IMR-90 (cell line): ENCODE measurements at regions of chr2 and their contacts with region 1.

Region 1: DNA sequence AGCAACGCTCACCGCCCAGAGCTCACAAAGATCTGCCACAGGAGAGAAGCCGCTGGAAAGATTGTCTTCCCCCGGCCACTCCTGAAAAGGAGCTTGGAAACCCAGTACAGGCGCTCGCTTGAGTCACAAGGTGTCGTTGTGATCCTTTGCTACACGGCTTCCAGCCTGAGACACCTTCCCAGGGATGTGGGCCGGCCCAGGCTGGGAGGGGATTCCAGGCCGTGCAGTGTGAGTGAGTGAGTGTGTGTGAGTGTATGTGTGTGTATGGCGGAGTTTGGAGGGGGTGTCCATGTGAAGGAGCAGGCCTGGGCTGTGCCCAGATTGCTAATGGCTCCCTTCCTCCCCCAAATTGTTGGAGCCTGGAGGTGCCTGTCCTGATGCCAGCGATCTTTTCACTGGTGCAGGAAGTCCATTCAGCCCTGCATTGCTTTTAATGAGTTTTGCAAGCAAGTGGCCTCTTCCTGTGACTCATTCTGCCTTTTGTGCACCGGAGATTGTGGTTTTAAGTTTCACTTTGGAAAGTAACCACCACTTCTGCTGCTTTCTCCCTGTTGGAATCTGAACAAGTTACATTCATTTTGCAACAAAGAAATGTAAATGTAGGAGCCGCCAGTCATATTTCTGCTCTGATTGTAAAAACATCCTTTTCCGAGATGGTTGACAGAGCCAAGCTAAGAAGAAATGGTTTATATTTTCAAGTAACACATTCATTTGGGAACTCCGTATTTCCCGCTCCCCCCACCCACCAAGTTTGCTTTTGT is 83.7 kb downstream of the LPIN1 start:
- DNase-seq: peak; percentile 98
- ATAC-seq: peak; percentile 83
- H3K4me3 ChIP-seq: peak overlapping the region; percentile 25; the same call in 1 of the 2 replicates
- H3K27ac ChIP-seq: peak overlapping the region; percentile 96
- H3K4me1 ChIP-seq: peaks cover 19% of the 10 kb centered on the region
- H3K27me3 ChIP-seq: no peaks in the 10 kb centered on the region
- CTCF ChIP-seq: peak; percentile 55
- POLR2A ChIP-seq: no peak
- RAD21 ChIP-seq: peak; percentile 68

Region 2: DNA sequence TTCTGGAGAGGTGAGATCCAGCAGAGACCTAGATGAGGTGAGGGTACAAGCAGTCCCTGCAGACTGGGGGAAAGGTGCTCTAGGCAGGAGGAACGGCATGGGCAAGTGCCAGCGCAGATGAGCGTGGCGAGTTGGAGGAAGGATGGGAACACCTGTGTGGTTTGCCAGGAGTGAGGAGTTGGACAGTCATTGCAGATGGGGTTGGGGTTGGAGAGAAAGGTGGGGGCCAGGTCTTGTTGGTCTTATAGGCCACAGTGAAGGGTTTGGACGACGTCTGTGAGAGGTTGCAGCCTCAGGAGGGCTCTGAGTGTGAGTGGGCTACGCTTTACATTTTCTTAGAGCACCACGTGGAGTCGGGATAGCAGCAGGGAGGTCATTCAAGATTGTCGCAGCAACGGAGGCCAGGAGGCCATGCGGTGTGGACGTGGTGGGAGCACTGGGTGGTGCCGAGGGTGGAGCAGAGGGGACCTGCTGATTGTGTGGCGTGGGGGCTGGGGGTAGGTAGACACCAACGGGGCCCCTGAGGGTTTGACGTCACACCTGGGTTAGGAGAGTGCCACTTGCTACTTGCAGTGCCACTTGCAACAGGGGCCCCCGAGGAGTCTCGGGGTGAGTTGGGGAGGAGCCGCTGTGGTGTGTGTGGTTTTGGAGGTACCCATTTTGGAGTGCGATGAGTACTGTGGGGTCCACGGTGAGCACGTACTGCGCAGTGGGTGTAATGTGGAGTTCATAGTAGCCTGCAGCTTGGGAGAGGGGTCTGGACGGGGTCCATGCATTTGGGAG is 17.5 kb before region 1 on chr2:
- CTCF ChIA-PET with region 1: no interaction called
- POLR2A ChIA-PET with region 1: no interaction called
- dilution Hi-C with region 1: no loop called
- in situ Hi-C with region 1: no loop called
- intact Hi-C with region 1: no loop called
- DNase-seq: no peak
- ATAC-seq: no peak
- H3K4me3 ChIP-seq: no peak overlapping the region
- H3K27ac ChIP-seq: no peak overlapping the region
- H3K4me1 ChIP-seq: no peaks in the 10 kb centered on the region; the same call in 1 of the 2 replicates
- H3K27me3 ChIP-seq: no peaks in the 10 kb centered on the region
- CTCF ChIP-seq: no peak
- POLR2A ChIP-seq: no peak
- RAD21 ChIP-seq: no peak

Region 3: GRCh38 chr2:11873356-11874154 is 43.4 kb after region 1 on chr2:
- CTCF ChIA-PET with region 1: no interaction called
- POLR2A ChIA-PET with region 1: no interaction called
- dilution Hi-C with region 1: no loop called
- in situ Hi-C with region 1: no loop called
- intact Hi-C with region 1: no loop called
- DNase-seq: peak; percentile 50
- ATAC-seq: peak; percentile 46; the same call in 1 of the 2 replicates
- H3K4me3 ChIP-seq: no peak overlapping the region
- H3K27ac ChIP-seq: peak overlapping the region; percentile 32; the same call in 1 of the 2 replicates
- H3K4me1 ChIP-seq: peaks cover 4% of the 10 kb centered on the region
- H3K27me3 ChIP-seq: peaks cover 16% of the 10 kb centered on the region
- CTCF ChIP-seq: no peak
- POLR2A ChIP-seq: no peak
- RAD21 ChIP-seq: no peak

Region 4: DNA sequence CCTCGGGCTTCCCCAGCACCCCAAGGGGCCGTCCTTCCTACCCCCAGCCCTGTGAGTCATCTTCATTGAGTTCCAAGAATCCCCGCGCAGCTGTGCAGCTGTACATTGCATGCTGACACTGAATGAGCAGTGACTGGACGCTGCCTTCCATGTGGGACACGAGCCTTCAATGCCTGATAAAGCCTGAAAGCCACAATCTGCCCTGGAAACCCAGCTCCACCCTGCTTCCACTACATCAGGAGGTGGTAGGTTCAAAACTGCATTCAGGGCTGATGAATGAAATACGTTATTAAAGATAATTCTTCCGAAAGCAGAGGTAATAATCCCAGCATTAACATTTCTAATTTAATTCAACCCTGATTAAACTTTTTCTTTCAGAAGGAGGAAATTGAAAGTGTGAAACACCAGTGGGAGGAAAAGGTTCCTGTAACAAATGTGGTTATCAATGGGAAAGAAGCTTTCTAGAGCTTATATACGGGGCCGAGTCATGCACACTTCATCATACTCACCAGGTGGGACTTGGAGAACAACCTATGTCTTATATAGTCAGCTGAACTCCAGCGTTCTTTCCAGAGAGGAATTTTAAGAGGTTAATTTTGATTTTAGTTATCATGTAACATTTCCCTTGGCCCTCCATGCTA is 276.4 kb after region 1 on chr2:
- CTCF ChIA-PET with region 1: no interaction called
- POLR2A ChIA-PET with region 1: no interaction called
- dilution Hi-C with region 1: no loop called
- in situ Hi-C with region 1: no loop called
- intact Hi-C with region 1: loop called (anchors 5 kb)
- DNase-seq: peak; percentile 99
- ATAC-seq: peak; percentile 97
- H3K4me3 ChIP-seq: no peak overlapping the region
- H3K27ac ChIP-seq: no peak overlapping the region
- H3K4me1 ChIP-seq: peaks cover 12% of the 10 kb centered on the region
- H3K27me3 ChIP-seq: no peaks in the 10 kb centered on the region
- CTCF ChIP-seq: no peak
- POLR2A ChIP-seq: no peak
- RAD21 ChIP-seq: peak; percentile 42

Region 5: DNA sequence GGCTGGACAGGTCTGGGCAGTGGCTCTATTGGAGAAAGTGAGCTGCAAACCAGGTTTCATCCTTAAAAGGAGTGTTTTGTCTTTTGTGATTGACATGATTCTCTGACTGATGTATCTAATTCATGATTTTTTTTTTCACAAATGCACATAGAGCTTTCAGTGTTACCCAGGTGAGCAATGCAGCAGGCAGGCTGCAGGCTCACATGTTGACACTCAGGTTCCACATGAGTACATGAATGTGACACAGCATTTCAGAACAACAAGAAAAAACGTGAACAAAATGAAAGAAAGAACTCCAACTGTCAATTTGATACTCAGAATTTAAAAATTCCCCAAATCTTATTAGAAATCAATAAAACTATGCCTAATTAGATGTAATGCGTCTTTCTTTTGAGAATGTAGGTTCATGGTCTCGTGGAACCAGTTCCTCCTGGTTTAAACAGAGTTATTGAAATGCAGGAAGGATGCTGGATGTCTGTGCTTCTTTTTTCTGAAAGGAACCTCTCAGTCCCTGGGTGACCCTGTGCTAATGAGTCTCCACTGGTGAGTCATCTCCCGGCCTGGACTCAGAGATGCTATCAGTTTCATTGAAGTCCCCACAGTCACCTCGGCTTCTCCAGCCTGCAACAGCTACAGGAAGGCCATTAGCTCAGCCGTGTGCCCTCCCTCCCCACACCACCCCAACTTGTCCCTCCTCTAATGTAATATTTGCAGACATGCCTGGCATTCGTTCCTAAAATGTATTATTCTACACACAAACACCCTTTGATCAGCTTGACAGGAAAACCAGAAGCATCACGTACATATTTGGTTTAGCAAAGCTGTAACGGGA is 346.7 kb after region 1 on chr2:
- CTCF ChIA-PET with region 1: no interaction called
- POLR2A ChIA-PET with region 1: no interaction called
- dilution Hi-C with region 1: no loop called
- in situ Hi-C with region 1: no loop called
- intact Hi-C with region 1: loop called (anchors 1 kb)
- DNase-seq: peak; percentile 76
- ATAC-seq: peak; percentile 87
- H3K4me3 ChIP-seq: no peak overlapping the region
- H3K27ac ChIP-seq: no peak overlapping the region; the same call in 1 of the 2 replicates
- H3K4me1 ChIP-seq: peaks cover 11% of the 10 kb centered on the region
- H3K27me3 ChIP-seq: no peaks in the 10 kb centered on the region
- CTCF ChIP-seq: no peak
- POLR2A ChIP-seq: no peak
- RAD21 ChIP-seq: no peak

Region 6: DNA sequence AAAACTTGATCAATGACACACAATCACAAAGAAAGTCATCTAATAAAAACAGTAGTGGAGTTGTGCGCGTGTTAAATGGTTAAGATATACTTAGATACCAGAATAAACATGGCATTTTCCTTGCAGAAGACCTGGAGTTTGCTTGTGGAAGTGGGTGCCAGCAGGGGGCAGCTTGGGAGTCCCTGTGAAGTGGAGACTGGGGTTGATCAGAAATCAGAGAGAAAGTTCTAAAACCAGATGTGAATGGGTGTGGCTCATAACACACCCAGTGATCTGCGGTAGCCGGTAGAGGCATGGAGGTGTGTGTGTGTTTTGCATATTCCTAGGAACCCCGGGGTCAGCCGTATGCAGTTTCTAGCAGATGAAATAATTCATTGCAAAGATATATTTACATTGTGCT is 586.5 kb after region 1 on chr2:
- CTCF ChIA-PET with region 1: interaction called, 3 read pairs
- POLR2A ChIA-PET with region 1: no interaction called
- dilution Hi-C with region 1: no loop called
- in situ Hi-C with region 1: no loop called
- intact Hi-C with region 1: loop called (anchors 10 kb)
- DNase-seq: peak; percentile 48
- ATAC-seq: peak; percentile 63
- H3K4me3 ChIP-seq: no peak overlapping the region
- H3K27ac ChIP-seq: peak overlapping the region; percentile 20; the same call in 1 of the 2 replicates
- H3K4me1 ChIP-seq: peaks cover 8% of the 10 kb centered on the region
- H3K27me3 ChIP-seq: no peaks in the 10 kb centered on the region
- CTCF ChIP-seq: peak; percentile 53
- POLR2A ChIP-seq: no peak
- RAD21 ChIP-seq: peak; percentile 62

Region 7: DNA sequence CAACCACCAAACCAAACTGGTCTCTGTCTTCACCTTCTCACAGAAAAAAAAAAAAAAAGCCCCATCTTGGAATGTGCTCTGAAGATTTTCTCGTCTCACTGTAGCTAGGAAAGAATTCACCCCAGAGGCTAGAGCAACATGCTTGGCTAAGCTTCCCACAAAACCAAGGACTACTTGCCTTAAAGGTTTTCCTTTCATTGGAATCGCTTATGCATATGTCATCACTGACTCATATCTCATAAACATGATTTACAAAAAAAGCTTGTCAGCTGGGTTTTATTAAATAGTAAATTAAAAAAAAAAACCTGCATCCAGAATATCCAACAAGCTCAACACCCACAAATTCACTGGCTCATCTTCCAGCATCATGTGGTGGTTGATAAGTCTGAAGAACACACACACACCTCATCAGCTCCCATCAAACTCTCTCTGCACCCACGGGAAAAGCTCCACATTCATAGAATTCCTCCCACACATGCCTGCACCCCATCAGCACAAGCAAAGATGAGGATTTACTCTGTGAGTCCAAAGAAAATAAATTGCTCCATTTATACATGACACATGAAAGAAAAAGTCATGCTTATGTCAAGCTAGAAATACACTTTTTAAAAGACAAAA is 704.6 kb after region 1 on chr2:
- CTCF ChIA-PET with region 1: no interaction called
- POLR2A ChIA-PET with region 1: interaction called, 3 read pairs
- dilution Hi-C with region 1: no loop called
- in situ Hi-C with region 1: loop called (anchors 10 kb)
- intact Hi-C with region 1: no loop called
- DNase-seq: peak; percentile 97
- ATAC-seq: peak; percentile 89
- H3K4me3 ChIP-seq: peak overlapping the region; percentile 22; the same call in 1 of the 2 replicates
- H3K27ac ChIP-seq: peak overlapping the region; percentile 87
- H3K4me1 ChIP-seq: peaks cover 3% of the 10 kb centered on the region; the same call in 1 of the 2 replicates
- H3K27me3 ChIP-seq: no peaks in the 10 kb centered on the region
- CTCF ChIP-seq: no peak
- POLR2A ChIP-seq: no peak
- RAD21 ChIP-seq: peak; percentile 34